ENCODE measurements at regions of chr11 and their contacts with region 1.

Region 1: DNA sequence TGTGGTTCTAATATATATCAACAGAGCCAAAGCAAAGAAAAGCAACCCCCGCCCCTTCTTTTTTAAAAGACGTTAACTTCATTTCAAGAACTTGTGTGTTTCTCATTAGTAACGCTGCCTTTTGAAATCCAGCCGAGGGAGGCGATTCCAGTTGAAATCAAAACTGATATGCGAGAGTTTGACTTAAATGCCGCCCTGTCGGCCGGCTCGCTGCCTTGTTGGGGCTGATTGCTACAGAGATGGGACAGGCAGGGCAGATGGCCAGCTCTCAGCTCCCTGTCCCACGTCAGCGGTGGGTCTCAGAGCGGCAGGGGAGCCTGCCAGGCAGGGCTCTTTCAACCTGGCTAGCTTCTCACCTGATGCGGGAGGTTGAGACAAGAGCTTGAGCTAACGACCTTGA is 51.9 kb upstream of the ALX4 start:
- DNase-seq: no peak
- ATAC-seq: no peak
- H3K4me3 ChIP-seq: no peak overlapping the region
- H3K27ac ChIP-seq: no peak overlapping the region
- H3K4me1 ChIP-seq: no peaks in the 10 kb centered on the region
- H3K27me3 ChIP-seq: peaks cover 0 to 18% (median 0%) of the 10 kb centered on the region in 7 donors
- CTCF ChIP-seq: no peak

Region 2: GRCh38 chr11:44456544-44457300 is 94.9 kb after region 1 on chr11:
- intact Hi-C with region 1: loop called in 1 of 10 experiments (anchors 10 kb)
- DNase-seq: no peak
- ATAC-seq: peak in 6 of 8 donors; percentile 17 to 77 (median 58)
- H3K4me3 ChIP-seq: no peak overlapping the region
- H3K27ac ChIP-seq: no peak overlapping the region
- H3K4me1 ChIP-seq: peaks cover 0 to 27% (median 8%) of the 10 kb centered on the region in 9 donors
- H3K27me3 ChIP-seq: no peaks in the 10 kb centered on the region
- CTCF ChIP-seq: peak in 7 of 9 donors; percentile 10 to 52 (median 41)